ENCODE measurements at regions of chr4 and their contacts with region 1.

Region 1: DNA sequence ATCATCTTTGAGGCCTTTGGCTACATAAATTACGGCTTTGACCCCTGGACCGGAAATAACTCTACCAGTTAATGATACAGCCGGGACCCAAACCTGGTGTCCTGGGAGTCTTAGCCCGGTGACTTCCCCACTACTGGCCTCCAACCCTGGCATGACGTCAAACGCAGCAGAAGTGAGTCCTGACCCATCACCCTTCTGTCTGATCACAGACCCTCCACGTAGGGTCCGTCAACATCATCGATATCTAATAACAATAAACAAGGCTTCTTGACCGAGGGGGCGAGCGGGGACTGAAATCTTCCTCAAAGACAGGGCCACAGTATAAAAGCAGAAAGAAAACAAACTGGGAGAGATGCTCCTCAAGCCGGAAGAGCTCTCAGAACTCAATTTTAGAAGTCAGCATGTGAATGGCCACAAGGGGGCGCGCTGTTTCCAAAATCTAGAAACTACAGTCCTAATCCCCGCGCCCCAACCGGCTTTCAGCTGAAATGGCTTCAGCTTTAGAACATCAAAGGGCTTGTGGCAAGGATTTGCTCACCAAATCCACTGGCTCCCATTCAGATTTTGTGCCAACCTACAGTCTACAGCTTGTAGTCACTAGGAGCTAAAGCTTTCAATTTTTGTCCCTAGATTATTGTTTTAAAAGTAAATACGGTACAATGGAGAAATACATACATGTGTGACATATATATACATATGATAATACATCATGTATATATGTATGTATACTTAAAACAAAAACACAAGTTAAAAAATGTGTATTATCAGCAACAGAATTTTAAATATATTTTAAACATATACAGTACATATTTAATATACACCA is 46.4 kb upstream of the ENPP6 start:
- DNase-seq: peak; percentile 96
- H3K4me3 Mint-ChIP-seq: no peak overlapping the region
- H3K27ac Mint-ChIP-seq: peak overlapping the region; percentile 26
- H3K4me1 Mint-ChIP-seq: peaks cover 50% of the 10 kb centered on the region
- H3K27me3 Mint-ChIP-seq: peaks cover 3% of the 10 kb centered on the region

Region 2: GRCh38 chr4:184143770-184144564 is 120.2 kb before region 1 on chr4:
- CTCF ChIA-PET with region 1: no interaction called
- POLR2A ChIA-PET with region 1: no interaction called
- DNase-seq: no peak
- H3K4me3 Mint-ChIP-seq: no peak overlapping the region
- H3K27ac Mint-ChIP-seq: no peak overlapping the region
- H3K4me1 Mint-ChIP-seq: peaks cover 15% of the 10 kb centered on the region
- H3K27me3 Mint-ChIP-seq: peaks cover 15% of the 10 kb centered on the region

Region 3: GRCh38 chr4:184237612-184238011 is 26.5 kb before region 1 on chr4:
- CTCF ChIA-PET with region 1: interaction called, 15 read pairs
- POLR2A ChIA-PET with region 1: interaction called, 6 read pairs
- DNase-seq: peak; percentile 72
- H3K4me3 Mint-ChIP-seq: peak overlapping the region; percentile 11
- H3K27ac Mint-ChIP-seq: peak overlapping the region; percentile 91
- H3K4me1 Mint-ChIP-seq: peaks cover 42% of the 10 kb centered on the region
- H3K27me3 Mint-ChIP-seq: no peaks in the 10 kb centered on the region

Region 4: DNA sequence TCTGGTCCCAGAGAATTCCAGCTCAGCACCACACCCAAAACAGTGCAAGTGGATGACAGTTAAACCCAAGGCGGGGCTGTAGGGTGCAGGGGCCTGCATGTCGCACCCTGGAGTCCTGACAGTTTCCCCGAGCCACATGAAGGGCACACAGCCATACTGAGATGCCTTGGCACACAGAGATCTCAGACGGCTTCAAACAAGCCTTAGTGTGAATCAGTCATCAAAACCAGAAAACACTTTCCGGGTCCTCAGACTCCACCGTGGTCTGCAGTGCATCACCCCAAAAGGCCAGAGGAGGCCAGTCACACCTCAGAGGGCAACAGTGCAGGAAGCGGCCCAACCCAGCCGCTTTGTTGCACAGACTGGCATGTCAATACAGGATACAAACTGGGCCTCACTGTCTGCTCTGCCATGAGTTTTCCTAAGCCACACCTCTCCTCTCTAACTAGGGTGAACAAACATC is 18.2 kb after region 1 on chr4:
- CTCF ChIA-PET with region 1: interaction called, 102 read pairs
- POLR2A ChIA-PET with region 1: interaction called, 137 read pairs
- DNase-seq: peak; percentile 70
- H3K4me3 Mint-ChIP-seq: no peak overlapping the region
- H3K27ac Mint-ChIP-seq: peak overlapping the region; percentile 84
- H3K4me1 Mint-ChIP-seq: peaks cover 53% of the 10 kb centered on the region
- H3K27me3 Mint-ChIP-seq: no peaks in the 10 kb centered on the region

Region 5: DNA sequence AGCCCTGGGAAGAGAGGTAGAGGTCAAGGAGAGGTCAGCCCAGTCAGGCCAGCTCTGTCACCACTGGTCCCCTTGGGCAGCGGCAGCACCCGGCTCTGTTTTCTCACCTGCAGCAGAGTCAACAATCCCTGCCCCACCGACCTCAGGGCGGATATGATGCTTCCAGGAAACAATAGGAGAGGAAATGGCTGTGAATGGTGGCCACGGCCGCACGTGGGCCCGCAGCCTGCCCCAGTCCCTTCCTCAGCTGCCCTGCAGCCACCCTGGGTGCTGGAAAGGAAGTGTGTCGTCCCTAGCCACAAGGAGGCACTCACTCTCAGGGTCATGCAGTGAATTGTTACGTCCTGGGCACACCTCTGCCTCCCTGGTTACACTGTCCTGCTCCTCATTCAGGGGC is 46.0 kb after region 1 on chr4:
- CTCF ChIA-PET with region 1: interaction called, 10 read pairs
- POLR2A ChIA-PET with region 1: interaction called, 7 read pairs
- DNase-seq: peak; percentile 79
- H3K4me3 Mint-ChIP-seq: peak overlapping the region; percentile 11
- H3K27ac Mint-ChIP-seq: peak overlapping the region; percentile 80
- H3K4me1 Mint-ChIP-seq: peaks cover 67% of the 10 kb centered on the region
- H3K27me3 Mint-ChIP-seq: no peaks in the 10 kb centered on the region

Region 6: GRCh38 chr4:184474263-184475095 is 210.4 kb after region 1 on chr4 and contains the start of gene IRF2:
- CTCF ChIA-PET with region 1: interaction called, 42 read pairs
- POLR2A ChIA-PET with region 1: interaction called, 114 read pairs
- DNase-seq: peak; percentile 98
- H3K4me3 Mint-ChIP-seq: peak within 1 kb of the TSS; percentile 91
- H3K27ac Mint-ChIP-seq: peak within 1 kb of the TSS; percentile 96
- H3K4me1 Mint-ChIP-seq: peaks cover 59% of the 10 kb centered on the region
- H3K27me3 Mint-ChIP-seq: no peaks in the 10 kb centered on the region
- total RNA-seq, gene IRF2: 77.2 to 78.5 TPM

Region 7: DNA sequence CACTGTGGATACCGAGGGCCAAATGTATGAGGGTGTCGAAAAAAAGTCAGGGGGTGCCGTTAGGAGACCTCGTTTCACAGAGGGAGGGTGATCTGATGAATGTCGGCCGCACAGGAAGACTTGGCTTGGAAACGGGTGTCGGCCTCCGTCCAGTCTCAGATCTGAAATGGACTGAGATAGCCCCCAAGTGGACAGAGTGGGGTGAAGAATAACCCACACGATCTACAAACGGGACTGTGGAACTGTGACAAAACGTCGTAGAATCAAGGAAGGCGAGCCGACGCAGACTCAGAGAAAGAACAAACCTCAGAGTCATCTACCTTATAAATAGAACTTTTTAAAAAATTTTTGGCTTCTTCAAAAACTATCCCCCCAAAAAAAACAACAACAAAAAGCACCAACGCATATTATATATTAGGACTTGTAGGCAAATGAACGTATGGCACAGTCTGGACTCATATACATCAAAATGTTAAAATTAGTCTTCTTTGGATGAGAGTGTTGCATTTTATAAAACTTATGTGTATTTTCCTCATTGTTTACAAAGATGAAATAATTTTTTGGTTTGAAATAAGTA is 274.0 kb after region 1 on chr4:
- CTCF ChIA-PET with region 1: interaction called, 51 read pairs
- POLR2A ChIA-PET with region 1: interaction called, 92 read pairs
- DNase-seq: peak; percentile 72
- H3K4me3 Mint-ChIP-seq: peak overlapping the region; percentile 85
- H3K27ac Mint-ChIP-seq: peak overlapping the region; percentile 88
- H3K4me1 Mint-ChIP-seq: peaks cover 49% of the 10 kb centered on the region
- H3K27me3 Mint-ChIP-seq: no peaks in the 10 kb centered on the region

Region 8: DNA sequence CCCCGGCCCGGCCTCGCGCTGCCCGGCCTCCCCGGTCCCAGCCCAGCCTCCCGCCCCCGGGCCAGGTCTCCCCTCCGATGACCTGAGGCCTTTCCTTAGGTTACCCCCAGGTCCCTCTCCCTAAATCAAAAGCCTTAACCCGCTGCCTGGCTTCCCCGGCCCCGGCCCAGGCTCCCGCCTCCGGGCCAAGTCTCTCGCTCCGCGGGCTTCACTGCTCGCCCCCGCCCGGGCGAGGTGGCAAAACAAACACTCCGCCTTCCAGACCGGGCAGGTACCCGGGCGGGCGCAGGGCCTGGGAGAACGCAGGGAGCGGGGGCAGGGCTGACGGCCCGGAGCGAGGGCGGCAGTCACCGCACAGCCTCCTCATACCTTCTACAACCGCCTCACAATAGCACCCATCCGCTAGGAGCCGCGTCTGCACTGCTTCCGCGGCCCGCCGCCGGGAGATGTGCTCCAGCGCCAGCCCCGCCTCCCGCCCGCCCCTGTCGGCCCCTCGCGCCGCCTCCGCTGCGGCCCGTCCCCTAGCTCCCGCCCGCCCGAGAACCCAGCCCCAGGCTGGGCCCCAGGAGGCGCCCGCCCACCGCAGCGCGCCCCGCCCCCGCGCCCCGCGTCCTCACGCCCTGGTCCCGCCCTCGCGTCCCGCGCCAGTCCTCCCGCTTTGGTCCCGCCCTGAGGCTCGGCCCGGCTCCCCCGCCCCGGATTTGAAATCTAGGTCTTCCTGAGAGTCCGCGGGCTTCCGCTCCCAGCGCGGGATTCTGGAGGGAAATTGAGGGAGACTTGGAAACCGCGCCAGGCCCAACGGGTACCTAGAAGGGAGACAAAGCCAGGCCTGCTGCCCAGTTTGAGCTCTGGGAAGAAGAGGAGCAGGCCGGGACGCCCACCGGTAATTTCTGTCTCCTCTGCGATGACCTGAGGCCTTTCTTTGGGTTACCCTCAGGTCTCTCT is 385.2 kb after region 1 on chr4 and contains the starts of genes CASP3 and PRIMPOL:
- CTCF ChIA-PET with region 1: interaction called, 48 read pairs
- POLR2A ChIA-PET with region 1: interaction called, 70 read pairs
- DNase-seq: peak; percentile 97
- H3K4me3 Mint-ChIP-seq: peak within 1 kb of the TSS; percentile 91
- H3K27ac Mint-ChIP-seq: peak within 1 kb of the TSS; percentile 89
- H3K4me1 Mint-ChIP-seq: peaks cover 63% of the 10 kb centered on the region
- H3K27me3 Mint-ChIP-seq: no peaks in the 10 kb centered on the region
- total RNA-seq, gene CASP3: 71.4 to 77.1 TPM
- total RNA-seq, gene PRIMPOL: 19.2 to 23.4 TPM